Left cardiac atrium (tissue), 4 donors: ENCODE measurements at regions of chr11 and their contacts with region 1.

Region 1: GRCh38 chr11:129230006-129230405 is 37.9 kb upstream of the ARHGAP32 start:
- DNase-seq: no peak
- ATAC-seq: no peak

Region 2: DNA sequence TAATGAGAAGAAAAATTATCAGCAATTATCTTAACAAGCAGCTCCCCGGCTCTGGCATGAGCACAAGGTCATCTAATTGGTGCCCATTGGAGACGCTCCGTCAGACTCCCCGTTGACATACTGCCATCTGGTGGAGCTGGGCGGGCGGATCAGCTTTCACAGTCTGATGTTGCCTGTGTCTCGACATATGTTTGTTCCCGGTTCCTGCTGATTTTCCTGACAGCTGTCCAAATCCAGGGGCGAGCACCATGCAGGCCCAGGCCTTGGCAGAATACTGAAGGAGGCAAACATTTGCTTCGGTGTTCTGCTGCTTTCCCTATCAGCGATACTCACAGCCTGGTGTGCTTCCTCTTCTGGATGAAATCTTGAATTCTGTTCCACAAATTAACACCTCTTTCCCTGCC is 101.9 kb after region 1 on chr11:
- intact Hi-C with region 1: loop called in 1 of 2 experiments (anchors 5 kb)
- DNase-seq: peak; percentile 82
- ATAC-seq: peak; percentile 92 to 97